Activated B cell treated with CpG ODN at 0.5 μM for 24 hours (primary cell): ENCODE measurements at regions of chr6 and their contacts with region 1.

Region 1: DNA sequence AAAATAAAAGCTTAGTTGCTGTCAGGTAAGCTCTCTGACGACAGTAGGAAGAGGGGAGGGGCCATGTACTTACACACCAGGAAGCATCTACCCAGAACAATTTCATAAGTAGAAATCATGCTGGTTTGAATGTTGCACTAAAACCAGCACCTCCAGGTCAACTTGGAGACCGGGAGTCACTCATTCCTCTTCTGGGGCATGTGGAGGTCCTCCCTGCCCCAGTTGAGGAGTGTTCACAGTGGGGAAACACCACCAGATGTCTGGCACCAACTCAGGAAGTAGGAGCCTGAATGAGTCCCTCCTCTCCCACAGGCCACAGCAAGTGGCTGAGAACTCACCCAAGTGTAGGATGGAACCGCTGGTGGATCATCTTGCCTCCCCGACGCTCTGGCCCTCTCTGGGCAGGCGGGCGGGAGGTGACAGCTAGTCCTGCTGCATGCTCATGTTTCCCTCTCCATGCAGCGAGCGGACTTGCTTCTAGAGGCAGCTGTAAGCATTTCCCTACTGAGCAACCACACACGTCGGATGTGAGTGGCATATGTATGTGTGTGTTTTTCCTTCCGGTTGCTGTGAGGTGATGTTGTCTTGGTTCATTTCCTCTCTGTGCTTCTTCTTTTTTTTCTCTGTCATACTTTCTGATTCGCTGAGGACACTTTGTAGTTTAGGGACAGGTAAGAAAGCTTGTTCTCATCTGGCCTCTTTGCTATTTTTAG is 149.5 kb upstream of the NEDD9 start:
- DNase-seq: peak; percentile 58
- ATAC-seq: peak; percentile 89
- H3K4me3 Mint-ChIP-seq: peak overlapping the region; percentile 91
- H3K27ac Mint-ChIP-seq: peak overlapping the region; percentile 93
- H3K4me1 Mint-ChIP-seq: peaks cover 84% of the 10 kb centered on the region
- H3K27me3 Mint-ChIP-seq: no peaks in the 10 kb centered on the region
- CTCF ChIP-seq: no peak

Region 2: GRCh38 chr6:11172501-11173332 is 209.2 kb before region 1 on chr6:
- CTCF ChIA-PET with region 1: interaction called, 3 read pairs
- POLR2A ChIA-PET with region 1: interaction called, 4 read pairs
- intact Hi-C with region 1: loop called (anchors 1 kb)
- DNase-seq: peak; percentile 68
- ATAC-seq: peak; percentile 77
- H3K4me3 Mint-ChIP-seq: peak overlapping the region; percentile 42
- H3K27ac Mint-ChIP-seq: no peak overlapping the region
- H3K4me1 Mint-ChIP-seq: peaks cover 9% of the 10 kb centered on the region
- H3K27me3 Mint-ChIP-seq: no peaks in the 10 kb centered on the region
- CTCF ChIP-seq: peak; percentile 89

Region 3: GRCh38 chr6:11366183-11366933 is 15.6 kb before region 1 on chr6:
- CTCF ChIA-PET with region 1: no interaction called
- POLR2A ChIA-PET with region 1: interaction called, 12 read pairs
- intact Hi-C with region 1: loop called (anchors 2 kb)
- DNase-seq: no peak
- ATAC-seq: peak; percentile 53
- H3K4me3 Mint-ChIP-seq: peak overlapping the region; percentile 59
- H3K27ac Mint-ChIP-seq: peak overlapping the region; percentile 85
- H3K4me1 Mint-ChIP-seq: peaks cover 93% of the 10 kb centered on the region
- H3K27me3 Mint-ChIP-seq: no peaks in the 10 kb centered on the region
- CTCF ChIP-seq: no peak

Region 4: GRCh38 chr6:11445146-11445545 is 63.2 kb after region 1 on chr6:
- CTCF ChIA-PET with region 1: no interaction called
- POLR2A ChIA-PET with region 1: interaction called, 10 read pairs
- intact Hi-C with region 1: no loop called
- DNase-seq: no peak
- ATAC-seq: no peak
- H3K4me3 Mint-ChIP-seq: peak overlapping the region; percentile 26
- H3K27ac Mint-ChIP-seq: peak overlapping the region; percentile 54
- H3K4me1 Mint-ChIP-seq: peaks cover 67% of the 10 kb centered on the region
- H3K27me3 Mint-ChIP-seq: no peaks in the 10 kb centered on the region
- CTCF ChIP-seq: no peak

Region 5: GRCh38 chr6:11537229-11538051 is 155.5 kb after region 1 on chr6 and contains the start of gene TMEM170B:
- CTCF ChIA-PET with region 1: no interaction called
- POLR2A ChIA-PET with region 1: no interaction called
- intact Hi-C with region 1: loop called (anchors 5 kb)
- DNase-seq: peak; percentile 99
- ATAC-seq: peak; percentile 94
- H3K4me3 Mint-ChIP-seq: peak within 1 kb of the TSS; percentile 84
- H3K27ac Mint-ChIP-seq: peak within 1 kb of the TSS; percentile 74
- H3K4me1 Mint-ChIP-seq: peaks cover 11% of the 10 kb centered on the region
- H3K27me3 Mint-ChIP-seq: no peaks in the 10 kb centered on the region
- CTCF ChIP-seq: no peak
- total RNA-seq, gene TMEM170B: 2.6 and 2.8 TPM in 2 replicates